Mammary epithelial cell (primary cell): ENCODE measurements at regions of chr7 and their contacts with region 1.

Region 1: GRCh38 chr7:552868-553635 is 33.4 kb upstream of the PDGFA start:
- DNase-seq: no peak
- H3K4me3 ChIP-seq: no peak overlapping the region
- H3K27ac ChIP-seq: no peak overlapping the region
- H3K4me1 ChIP-seq: no peaks in the 10 kb centered on the region
- H3K27me3 ChIP-seq: no peaks in the 10 kb centered on the region
- CTCF ChIP-seq: no peak

Region 2: DNA sequence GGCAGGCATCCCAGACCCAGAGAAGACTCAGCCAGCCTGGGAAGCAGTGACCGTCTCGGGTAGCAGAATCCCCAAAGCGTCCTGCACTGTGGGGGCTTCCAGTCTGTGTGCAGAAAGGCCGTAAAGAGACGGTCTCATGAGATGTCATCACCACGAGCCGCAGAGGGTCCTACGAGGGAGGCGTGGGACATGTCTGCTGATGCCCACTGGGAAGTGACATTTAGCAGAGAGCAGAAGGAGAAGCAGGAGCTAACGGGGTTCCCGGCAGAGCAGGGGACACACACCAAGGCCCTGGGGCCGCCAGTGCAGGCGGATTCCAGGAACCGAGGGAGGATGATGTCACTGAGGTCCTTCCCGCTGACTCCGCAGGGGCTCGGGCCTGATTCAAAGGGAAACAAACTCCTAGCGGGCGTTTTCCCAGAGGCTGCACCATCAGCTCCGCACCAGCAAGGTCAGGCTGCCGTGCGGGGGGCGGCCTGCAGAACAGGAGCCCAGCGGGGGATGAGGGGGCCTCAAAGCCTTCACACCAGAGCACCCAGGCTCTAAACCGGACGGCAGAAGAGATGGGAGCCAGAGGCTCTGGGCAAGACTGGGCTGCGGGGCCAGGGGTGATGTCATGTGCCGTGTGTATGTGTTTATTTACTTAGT is 52.0 kb after region 1 on chr7:
- CTCF ChIA-PET with region 1: no interaction called
- dilution Hi-C with region 1: loop called (anchors 5 kb)
- in situ Hi-C with region 1: no loop called
- intact Hi-C with region 1: no loop called
- DNase-seq: no peak
- H3K4me3 ChIP-seq: no peak overlapping the region
- H3K27ac ChIP-seq: no peak overlapping the region
- H3K4me1 ChIP-seq: peaks cover 3% of the 10 kb centered on the region
- H3K27me3 ChIP-seq: no peaks in the 10 kb centered on the region
- CTCF ChIP-seq: no peak